K562 (cell line): ENCODE measurements at regions of chr9 and their contacts with region 1.

Region 1: DNA sequence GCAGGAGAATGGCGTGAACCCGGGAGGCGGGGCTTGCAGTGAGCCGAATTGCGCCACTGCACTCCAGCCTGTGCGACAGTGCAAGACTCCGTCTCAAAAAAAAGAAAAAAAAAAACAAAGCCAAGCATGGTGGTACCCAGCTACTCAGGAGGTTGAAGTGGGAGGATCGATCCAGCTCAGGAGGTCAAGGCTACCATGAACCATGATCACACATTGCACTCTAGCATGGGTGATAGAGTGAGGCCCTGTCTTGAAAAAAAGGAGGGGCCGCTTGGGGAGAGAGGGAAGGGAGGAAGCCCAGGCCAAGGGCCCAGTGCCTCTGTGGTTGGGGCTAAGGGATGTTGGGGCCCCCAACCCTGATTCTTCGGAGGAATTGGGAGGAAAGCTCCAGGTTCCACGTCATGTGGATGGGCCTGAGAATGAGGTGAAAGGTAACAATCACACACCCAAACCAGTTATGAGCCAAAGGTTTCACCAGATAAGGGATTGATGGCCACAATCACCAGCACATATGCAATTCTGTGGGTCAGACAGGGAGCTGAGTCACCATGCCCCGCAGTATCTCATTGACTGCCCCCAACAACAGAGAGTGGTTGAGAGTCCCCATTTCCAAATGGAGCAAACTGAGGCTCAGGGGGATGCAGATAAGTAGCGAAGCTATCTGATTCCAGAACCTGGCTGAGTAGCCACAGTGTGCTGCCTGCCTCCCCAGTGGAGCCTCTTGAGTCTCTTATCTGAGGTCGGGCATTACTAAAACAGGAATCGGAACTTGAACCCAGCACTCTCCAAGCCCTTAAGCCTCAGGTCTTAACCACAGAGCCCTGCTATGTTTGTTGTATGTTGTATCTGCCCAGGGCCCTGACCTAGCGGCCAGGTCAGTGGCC is 20.5 kb downstream of the SWI5 start:
- DNase-seq: peak; percentile 85 to 97 (median 90)
- ATAC-seq: peak; percentile 73
- H3K4me3 ChIP-seq: no peak overlapping the region
- H3K27ac ChIP-seq: peak overlapping the region; percentile 49
- H3K4me1 ChIP-seq: peaks cover 38 to 42% of the 10 kb centered on the region in 2 experiments
- H3K27me3 ChIP-seq: no peaks in the 10 kb centered on the region
- CTCF ChIP-seq: peak in 1 of 3 experiments; percentile 13; a peak in 1 of 6 replicates
- EP300 ChIP-seq: peak; percentile 69
- POLR2A ChIP-seq: no peak
- RAD21 ChIP-seq: peak; percentile 4 to 36; a peak in 1 of 4 replicates

Region 2: GRCh38 chr9:128310461-128310860 is 13.9 kb after region 1 on chr9:
- CTCF ChIA-PET with region 1: interaction called, 3 read pairs
- POLR2A ChIA-PET with region 1: interaction called, 38 read pairs
- in situ Hi-C with region 1: no loop called
- intact Hi-C with region 1: no loop called
- DNase-seq: no peak
- ATAC-seq: no peak
- H3K4me3 ChIP-seq: no peak overlapping the region
- H3K27ac ChIP-seq: peak overlapping the region; percentile 13; the same call in 2 of the 3 replicates
- H3K4me1 ChIP-seq: peaks cover 28 to 30% of the 10 kb centered on the region in 2 experiments
- H3K27me3 ChIP-seq: no peaks in the 10 kb centered on the region
- CTCF ChIP-seq: no peak
- EP300 ChIP-seq: no peak
- POLR2A ChIP-seq: no peak
- RAD21 ChIP-seq: no peak

Region 3: DNA sequence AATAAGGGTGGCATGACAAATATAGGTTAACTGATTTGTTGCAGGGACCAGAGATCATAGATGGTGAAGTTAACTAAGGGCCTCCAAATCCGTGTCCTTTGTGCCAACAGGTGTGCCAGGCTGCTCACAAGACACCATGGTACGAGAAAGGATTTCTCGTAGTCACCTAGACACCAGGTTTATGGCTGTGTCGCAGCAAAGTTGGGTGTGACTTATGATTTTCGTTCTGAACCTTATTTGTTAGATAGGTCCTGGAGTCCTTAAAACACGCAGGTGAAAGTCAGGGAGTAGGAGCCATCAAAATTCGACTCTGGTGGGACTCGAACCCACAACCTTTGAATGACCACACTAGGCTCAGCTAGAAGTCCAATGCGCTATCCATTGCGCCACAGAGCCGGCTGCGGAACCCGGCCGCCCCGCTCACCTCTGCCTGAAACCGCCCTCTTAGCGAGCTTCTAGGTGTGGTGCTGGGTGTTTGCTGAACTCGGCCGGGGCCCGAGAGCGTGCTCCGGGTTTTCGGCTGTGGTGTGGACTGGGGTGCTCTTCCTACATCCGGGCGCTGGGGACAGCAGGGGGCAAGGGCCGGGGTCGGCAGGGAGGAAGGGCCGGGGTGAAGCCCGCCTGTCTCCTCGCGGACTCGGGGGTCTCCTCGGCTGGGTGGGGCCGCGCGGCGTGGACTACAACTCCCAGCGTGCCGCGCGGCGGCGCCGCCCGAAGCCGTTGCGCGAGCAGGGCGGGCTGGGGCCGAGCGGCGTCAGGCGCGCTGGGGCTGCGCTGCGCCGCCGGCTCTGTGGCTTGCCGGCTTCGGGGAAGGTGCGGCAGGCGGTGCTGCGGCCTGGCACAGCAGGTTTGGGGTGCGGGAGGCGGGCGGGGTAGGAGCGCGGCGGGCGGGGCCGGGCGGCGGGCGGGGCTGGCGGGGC is 43.5 kb after region 1 on chr9 and contains the start of gene SLC27A4:
- CTCF ChIA-PET with region 1: interaction called, 9 read pairs
- POLR2A ChIA-PET with region 1: interaction called, 4 read pairs
- in situ Hi-C with region 1: no loop called
- intact Hi-C with region 1: loop called (anchors 1 kb)
- DNase-seq: peak; percentile 94 to 97 (median 96)
- ATAC-seq: peak; percentile 94
- H3K4me3 ChIP-seq: peak within 1 kb of the TSS; percentile 52
- H3K27ac ChIP-seq: peak within 1 kb of the TSS; percentile 62
- H3K4me1 ChIP-seq: peaks cover 10 to 19% of the 10 kb centered on the region in 2 experiments; a peak in 4 of 5 replicates
- H3K27me3 ChIP-seq: no peaks in the 10 kb centered on the region
- CTCF ChIP-seq: peak in 2 of 3 experiments; percentile 3 to 10; a peak in 3 of 6 replicates
- EP300 ChIP-seq: peak; percentile 50
- POLR2A ChIP-seq: peak; percentile 79
- RAD21 ChIP-seq: peak; percentile 13 to 30; a peak in 2 of 4 replicates
- polyA plus RNA-seq, gene SLC27A4: 0.25 to 0.92 TPM

Region 4: GRCh38 chr9:129685220-129685932 is 1388.8 kb after region 1 on chr9:
- CTCF ChIA-PET with region 1: no interaction called
- POLR2A ChIA-PET with region 1: interaction called, 3 read pairs
- in situ Hi-C with region 1: no loop called
- intact Hi-C with region 1: loop called (anchors 5 kb)
- DNase-seq: no peak
- ATAC-seq: no peak
- H3K4me3 ChIP-seq: no peak overlapping the region
- H3K27ac ChIP-seq: no peak overlapping the region
- H3K4me1 ChIP-seq: peaks cover 0 to 30% of the 10 kb centered on the region in 2 experiments; a peak in 3 of 5 replicates
- H3K27me3 ChIP-seq: peaks cover 22 to 49% of the 10 kb centered on the region in 2 experiments; a peak in 4 of 5 replicates
- CTCF ChIP-seq: no peak
- EP300 ChIP-seq: no peak
- POLR2A ChIP-seq: no peak
- RAD21 ChIP-seq: no peak

Region 5: GRCh38 chr9:129783516-129784361 is 1487.2 kb after region 1 on chr9:
- CTCF ChIA-PET with region 1: interaction called, 4 read pairs
- POLR2A ChIA-PET with region 1: no interaction called
- in situ Hi-C with region 1: loop called (anchors 25 kb)
- intact Hi-C with region 1: loop called (anchors 2 kb)
- DNase-seq: peak; percentile 89 to 97 (median 96)
- ATAC-seq: peak; percentile 97
- H3K4me3 ChIP-seq: no peak overlapping the region
- H3K27ac ChIP-seq: no peak overlapping the region
- H3K4me1 ChIP-seq: peaks cover 8 to 15% of the 10 kb centered on the region in 2 experiments; a peak in 3 of 5 replicates
- H3K27me3 ChIP-seq: no peaks in the 10 kb centered on the region; a peak in 1 of 5 replicates
- CTCF ChIP-seq: peak; percentile 97 to 99 (median 99)
- EP300 ChIP-seq: no peak; the same call in 1 of the 2 replicates
- POLR2A ChIP-seq: no peak
- RAD21 ChIP-seq: peak; percentile 100